ENCODE measurements at regions of chr5 and their contacts with region 1.

Region 1: DNA sequence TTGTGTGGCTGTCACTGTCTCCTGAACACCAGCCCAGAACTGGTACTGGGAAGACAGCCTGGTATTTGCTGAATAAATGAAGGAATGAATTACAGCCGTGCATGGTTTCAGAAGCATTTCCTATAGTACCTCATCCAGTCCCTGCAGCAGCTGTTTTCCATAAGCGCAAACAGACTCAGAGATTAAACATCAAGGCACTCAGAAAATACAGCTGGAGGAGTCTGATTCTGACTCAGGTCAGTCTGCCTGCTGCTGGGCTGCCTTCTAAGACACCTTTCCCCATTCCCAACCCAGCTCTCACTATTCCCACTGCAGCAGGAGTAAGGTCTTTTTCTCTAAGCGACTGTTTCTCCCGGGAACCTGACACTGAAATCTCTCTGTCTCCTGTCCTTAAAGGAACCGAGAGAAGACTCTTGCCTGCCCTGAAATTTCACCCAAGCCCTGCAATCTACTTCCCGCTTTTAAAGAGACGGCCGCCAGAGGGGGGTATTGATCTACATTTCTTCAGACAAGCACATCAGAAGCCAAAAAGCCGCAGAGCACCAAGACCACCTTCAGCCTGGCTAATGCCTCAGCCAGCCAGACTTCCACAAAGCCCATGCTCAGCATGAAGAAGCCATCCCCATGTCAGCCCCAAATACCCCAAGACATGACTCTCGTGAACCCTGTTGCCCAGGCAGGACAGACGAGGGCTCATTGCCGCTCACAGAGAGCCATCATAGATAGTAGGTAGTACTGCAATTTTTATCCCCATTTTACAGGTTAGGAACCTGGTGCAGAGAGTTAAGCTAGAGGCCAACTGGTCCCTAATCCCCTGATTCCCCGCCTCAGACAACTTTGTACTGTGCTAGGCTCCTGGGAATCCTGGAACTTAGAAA is 5.4 kb upstream of the FOXI1 start:
- DNase-seq: peak; percentile 50
- H3K4me3 Mint-ChIP-seq: no peak overlapping the region
- H3K27ac Mint-ChIP-seq: no peak overlapping the region
- H3K4me1 Mint-ChIP-seq: no peaks in the 10 kb centered on the region
- H3K27me3 Mint-ChIP-seq: peaks cover 18% of the 10 kb centered on the region

Region 2: DNA sequence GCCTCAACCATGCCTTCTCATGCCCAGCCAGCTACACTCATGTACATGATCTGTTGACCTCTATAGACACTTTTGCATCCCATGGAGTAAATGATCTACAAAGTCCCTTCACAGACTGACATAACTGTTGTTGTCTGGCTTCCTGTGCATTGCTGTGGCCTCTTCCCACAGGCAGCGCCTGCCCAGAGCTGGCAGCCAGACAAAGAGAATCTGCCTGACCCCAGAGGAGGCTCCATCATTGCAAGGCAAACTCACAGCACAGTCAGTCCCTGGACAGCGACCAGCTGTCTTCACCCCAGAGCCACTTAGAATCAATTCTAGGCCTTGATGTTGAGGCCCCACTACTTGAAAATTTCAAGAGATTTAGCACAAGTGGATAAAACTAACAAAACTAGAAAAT is 185.5 kb before region 1 on chr5:
- intact Hi-C with region 1: no loop called
- DNase-seq: no peak
- H3K4me3 Mint-ChIP-seq: no peak overlapping the region
- H3K27ac Mint-ChIP-seq: no peak overlapping the region
- H3K4me1 Mint-ChIP-seq: no peaks in the 10 kb centered on the region
- H3K27me3 Mint-ChIP-seq: no peaks in the 10 kb centered on the region

Region 3: DNA sequence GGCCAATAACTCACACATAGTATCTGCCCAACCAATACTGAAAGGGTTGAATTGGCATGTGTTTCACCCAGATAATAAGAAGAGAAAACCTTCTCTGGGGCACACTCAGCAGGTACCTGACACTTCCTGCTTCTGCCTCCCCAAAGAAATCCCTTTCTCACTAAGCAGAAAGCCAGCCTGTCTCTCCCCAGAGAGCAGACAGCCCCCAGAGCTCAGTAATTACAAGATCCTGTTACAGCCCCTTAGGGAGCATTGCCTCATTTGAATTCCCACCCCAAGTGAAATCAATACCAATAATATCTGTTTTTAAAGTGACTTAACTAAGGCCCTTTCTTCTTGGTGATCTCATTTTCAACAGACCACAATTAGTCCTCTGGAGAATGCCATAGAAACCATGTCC is 33.2 kb before region 1 on chr5:
- intact Hi-C with region 1: no loop called
- DNase-seq: no peak
- H3K4me3 Mint-ChIP-seq: no peak overlapping the region
- H3K27ac Mint-ChIP-seq: no peak overlapping the region
- H3K4me1 Mint-ChIP-seq: no peaks in the 10 kb centered on the region
- H3K27me3 Mint-ChIP-seq: no peaks in the 10 kb centered on the region

Region 4: DNA sequence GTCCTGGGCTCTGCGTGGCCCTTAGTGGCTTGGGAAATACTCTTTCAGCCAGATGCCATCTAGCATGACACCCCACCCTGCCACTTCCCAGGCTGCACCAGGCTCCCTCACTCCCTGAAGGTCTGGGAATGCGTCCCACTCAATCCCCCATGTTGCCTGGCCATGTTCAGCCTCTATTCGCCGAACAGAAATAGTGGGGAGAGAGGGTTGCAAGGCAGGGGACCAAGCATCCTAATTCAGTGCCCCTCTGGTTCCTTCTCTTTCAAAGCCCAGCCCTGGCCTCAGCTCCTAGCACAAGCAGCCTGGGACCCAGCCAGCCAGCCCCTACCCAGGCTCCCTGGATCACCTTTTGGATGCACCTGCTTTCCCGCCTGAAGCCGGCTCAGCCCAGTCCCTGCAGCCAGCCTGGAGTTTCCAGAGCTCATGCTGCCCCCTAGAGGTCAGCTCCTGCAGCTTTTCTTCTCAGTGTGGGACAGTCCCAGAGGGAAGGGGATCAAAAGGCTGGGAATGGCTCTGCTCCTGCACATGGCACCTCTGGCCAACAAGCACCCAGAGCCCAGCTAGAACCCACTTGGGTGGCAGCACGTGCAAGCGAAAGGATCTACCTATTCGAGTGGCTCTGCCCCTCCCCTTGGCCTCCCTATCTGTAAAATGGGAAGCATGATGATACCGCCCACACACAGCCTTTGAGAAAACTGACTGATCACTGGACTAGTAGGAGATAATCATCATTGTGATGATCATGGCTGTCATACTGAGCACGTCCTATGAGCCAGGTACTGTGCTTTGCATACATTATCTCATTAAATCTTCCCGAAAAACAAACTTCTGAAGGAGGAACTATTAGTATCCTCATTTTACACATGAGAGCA is 83.7 kb after region 1 on chr5:
- intact Hi-C with region 1: loop called (anchors 1 kb)
- DNase-seq: peak; percentile 25
- H3K4me3 Mint-ChIP-seq: no peak overlapping the region
- H3K27ac Mint-ChIP-seq: no peak overlapping the region
- H3K4me1 Mint-ChIP-seq: no peaks in the 10 kb centered on the region
- H3K27me3 Mint-ChIP-seq: peaks cover 8% of the 10 kb centered on the region

Region 5: DNA sequence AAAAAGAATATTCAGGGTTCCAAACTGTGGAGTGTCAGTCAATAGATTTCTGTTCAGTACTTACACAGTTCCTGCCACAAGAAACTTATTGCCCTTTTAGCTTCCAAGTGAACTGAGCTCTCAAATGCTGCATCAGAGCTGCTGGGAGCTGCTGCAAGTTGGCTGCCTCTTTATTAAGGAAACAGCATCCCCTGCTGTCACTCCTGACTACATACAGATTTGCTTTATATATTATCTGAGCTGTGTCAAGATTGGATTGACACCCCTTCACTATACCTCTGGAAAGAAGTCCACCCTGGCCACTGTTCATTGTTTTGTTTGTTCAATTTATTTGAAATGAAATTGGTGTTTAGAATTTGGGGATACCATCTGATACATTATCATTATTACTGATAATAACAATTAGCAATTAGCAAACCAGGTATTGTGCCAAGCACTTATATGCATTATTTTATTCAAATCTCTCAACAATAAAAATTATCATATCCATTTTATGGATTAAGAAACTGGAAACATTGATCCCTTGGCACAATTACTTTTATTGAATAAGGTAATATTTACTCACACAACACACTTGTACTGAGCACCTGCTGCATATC is 116.1 kb after region 1 on chr5:
- intact Hi-C with region 1: loop called (anchors 2 kb)
- DNase-seq: no peak
- H3K4me3 Mint-ChIP-seq: no peak overlapping the region
- H3K27ac Mint-ChIP-seq: no peak overlapping the region
- H3K4me1 Mint-ChIP-seq: no peaks in the 10 kb centered on the region
- H3K27me3 Mint-ChIP-seq: peaks cover 15% of the 10 kb centered on the region

Region 6: GRCh38 chr5:170338933-170339779 is 238.9 kb after region 1 on chr5:
- intact Hi-C with region 1: loop called (anchors 10 kb)
- DNase-seq: peak; percentile 49
- H3K4me3 Mint-ChIP-seq: no peak overlapping the region
- H3K27ac Mint-ChIP-seq: no peak overlapping the region
- H3K4me1 Mint-ChIP-seq: peaks cover 46% of the 10 kb centered on the region
- H3K27me3 Mint-ChIP-seq: peaks cover 10% of the 10 kb centered on the region

Region 7: GRCh38 chr5:170420780-170421412 is 320.6 kb after region 1 on chr5:
- intact Hi-C with region 1: loop called (anchors 5 kb)
- DNase-seq: peak; percentile 22
- H3K4me3 Mint-ChIP-seq: no peak overlapping the region
- H3K27ac Mint-ChIP-seq: no peak overlapping the region
- H3K4me1 Mint-ChIP-seq: peaks cover 2% of the 10 kb centered on the region
- H3K27me3 Mint-ChIP-seq: peaks cover 35% of the 10 kb centered on the region

Measured in activated T-helper 2 cell treated with anti-CD3 and anti-CD28 coated beads, Interferon-gamma antibody, Interleukin-2, Interleukin-4, amounts not matched to agents 10 μg/mL and 5 μg/mL and 100 μg/mL, durations not matched to agents 14 hours and 24 hours and 36 hours (primary cell).